CD14-positive monocyte (primary cell): ENCODE measurements at regions of chr1 and their contacts with region 1.

Region 1: GRCh38 chr1:10814954-10815857 is 18.8 kb upstream of the CASZ1 start:
- DNase-seq: no peak
- H3K4me3 ChIP-seq: no peak overlapping the region
- H3K4me3 Mint-ChIP-seq: no peak overlapping the region
- H3K27ac ChIP-seq: no peak overlapping the region
- H3K27ac Mint-ChIP-seq: no peak overlapping the region
- H3K4me1 ChIP-seq: no peaks in the 10 kb centered on the region
- H3K4me1 Mint-ChIP-seq: no peaks in the 10 kb centered on the region
- H3K27me3 ChIP-seq: peaks cover 0 to 4% of the 10 kb centered on the region in 2 donors
- H3K27me3 Mint-ChIP-seq: peaks cover 4 to 7% (median 6%) of the 10 kb centered on the region in 3 donors
- CTCF ChIP-seq: no peak

Region 2: DNA sequence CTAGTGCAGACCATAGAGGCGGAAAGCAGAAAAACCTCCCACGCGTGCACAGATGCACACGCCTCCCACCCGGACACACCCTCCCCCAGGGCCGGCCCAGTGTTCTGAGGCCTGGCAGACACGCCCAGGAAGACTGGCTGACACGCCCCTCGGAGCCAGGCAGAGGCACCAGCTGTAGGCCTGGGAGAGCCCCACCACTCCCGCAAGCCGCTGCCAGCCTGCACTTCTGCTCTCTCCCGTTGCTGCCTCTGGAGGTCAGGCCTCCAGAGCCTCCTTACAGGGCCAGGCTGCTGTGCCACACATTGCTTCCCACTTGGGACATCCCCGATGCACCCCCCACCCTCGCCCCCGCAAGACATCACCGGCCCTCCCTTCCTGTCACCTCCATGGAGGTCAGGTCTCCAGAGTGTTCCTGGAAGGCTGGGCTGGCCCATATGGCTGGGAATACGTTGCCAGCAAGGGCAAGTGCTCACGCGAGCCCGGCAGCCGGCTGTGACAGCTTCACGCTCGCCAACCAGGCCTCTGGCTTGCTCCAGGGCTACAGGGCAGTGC is 59.2 kb before region 1 on chr1:
- intact Hi-C with region 1: loop called in 1 of 2 experiments (anchors 10 kb)
- DNase-seq: no peak
- H3K4me3 ChIP-seq: no peak overlapping the region
- H3K4me3 Mint-ChIP-seq: no peak overlapping the region
- H3K27ac ChIP-seq: no peak overlapping the region
- H3K27ac Mint-ChIP-seq: no peak overlapping the region
- H3K4me1 ChIP-seq: no peaks in the 10 kb centered on the region
- H3K4me1 Mint-ChIP-seq: peaks cover 6% of the 10 kb centered on the region
- H3K27me3 ChIP-seq: no peaks in the 10 kb centered on the region
- H3K27me3 Mint-ChIP-seq: peaks cover 4 to 18% (median 8%) of the 10 kb centered on the region in 3 donors
- CTCF ChIP-seq: no peak